ENCODE measurements at regions of chr12 and their contacts with region 1.

Region 1: GRCh38 chr12:123723765-123724164 is 11.6 kb downstream of the ATP6V0A2 start:
- DNase-seq: peak; percentile 61
- ATAC-seq: peak; percentile 81
- H3K4me3 Mint-ChIP-seq: no peak overlapping the region
- H3K27ac Mint-ChIP-seq: peak overlapping the region; percentile 68
- H3K4me1 Mint-ChIP-seq: peaks cover 42% of the 10 kb centered on the region
- H3K27me3 Mint-ChIP-seq: no peaks in the 10 kb centered on the region
- CTCF ChIP-seq: no peak

Region 2: GRCh38 chr12:123713398-123713797 is 10.4 kb before region 1 on chr12:
- CTCF ChIA-PET with region 1: interaction called, 6 read pairs
- POLR2A ChIA-PET with region 1: interaction called, 59 read pairs
- intact Hi-C with region 1: no loop called
- DNase-seq: peak; percentile 24
- ATAC-seq: no peak
- H3K4me3 Mint-ChIP-seq: peak overlapping the region; percentile 95
- H3K27ac Mint-ChIP-seq: peak overlapping the region; percentile 88
- H3K4me1 Mint-ChIP-seq: peaks cover 36% of the 10 kb centered on the region
- H3K27me3 Mint-ChIP-seq: no peaks in the 10 kb centered on the region
- CTCF ChIP-seq: no peak

Region 3: DNA sequence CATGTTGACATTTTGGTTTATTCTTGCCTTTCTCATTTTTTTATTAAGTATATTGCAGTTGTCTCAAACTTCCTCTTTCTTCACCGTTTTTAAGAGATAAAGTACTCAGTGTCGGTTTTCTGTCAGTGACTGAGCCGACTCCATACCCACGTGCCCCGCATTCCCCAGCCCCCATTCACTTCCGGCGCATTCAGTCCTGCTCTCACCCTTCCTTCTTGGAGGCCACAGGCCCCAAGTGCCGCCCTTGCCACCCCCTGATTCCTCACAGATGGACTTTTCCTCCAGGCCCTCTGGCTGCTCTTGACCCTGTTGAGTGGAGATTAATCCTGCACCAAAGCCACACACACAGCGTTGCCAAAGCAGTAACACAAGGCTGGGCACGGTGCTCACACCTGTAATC is 19.2 kb after region 1 on chr12:
- CTCF ChIA-PET with region 1: no interaction called
- POLR2A ChIA-PET with region 1: no interaction called
- intact Hi-C with region 1: no loop called
- DNase-seq: peak; percentile 25
- ATAC-seq: no peak
- H3K4me3 Mint-ChIP-seq: no peak overlapping the region
- H3K27ac Mint-ChIP-seq: peak overlapping the region; percentile 77
- H3K4me1 Mint-ChIP-seq: peaks cover 29% of the 10 kb centered on the region
- H3K27me3 Mint-ChIP-seq: no peaks in the 10 kb centered on the region
- CTCF ChIP-seq: no peak